Activated T-helper 1 cell treated with anti-CD3 and anti-CD28 coated beads, Interleukin-12 subunit alpha, Interleukin-12 subunit beta, Interleukin-2, Interleukin-4 antibody, amounts not matched to agents 30 ng/mL and 10 ng/mL and 1 ng/mL, durations not matched to agents 14 hours and 24 hours and 36 hours (primary cell): ENCODE measurements at regions of chr12 and their contacts with region 1.

Region 1: GRCh38 chr12:101186291-101186690 is 23.7 kb downstream of the SLC5A8 start:
- DNase-seq: no peak
- H3K4me3 Mint-ChIP-seq: no peak overlapping the region
- H3K27ac Mint-ChIP-seq: no peak overlapping the region
- H3K4me1 Mint-ChIP-seq: no peaks in the 10 kb centered on the region
- H3K27me3 Mint-ChIP-seq: peaks cover 5% of the 10 kb centered on the region

Region 2: GRCh38 chr12:101165319-101165718 is 21.0 kb before region 1 on chr12:
- intact Hi-C with region 1: loop called (anchors 1 kb)
- DNase-seq: no peak
- H3K4me3 Mint-ChIP-seq: no peak overlapping the region
- H3K27ac Mint-ChIP-seq: no peak overlapping the region
- H3K4me1 Mint-ChIP-seq: no peaks in the 10 kb centered on the region
- H3K27me3 Mint-ChIP-seq: no peaks in the 10 kb centered on the region

Region 3: DNA sequence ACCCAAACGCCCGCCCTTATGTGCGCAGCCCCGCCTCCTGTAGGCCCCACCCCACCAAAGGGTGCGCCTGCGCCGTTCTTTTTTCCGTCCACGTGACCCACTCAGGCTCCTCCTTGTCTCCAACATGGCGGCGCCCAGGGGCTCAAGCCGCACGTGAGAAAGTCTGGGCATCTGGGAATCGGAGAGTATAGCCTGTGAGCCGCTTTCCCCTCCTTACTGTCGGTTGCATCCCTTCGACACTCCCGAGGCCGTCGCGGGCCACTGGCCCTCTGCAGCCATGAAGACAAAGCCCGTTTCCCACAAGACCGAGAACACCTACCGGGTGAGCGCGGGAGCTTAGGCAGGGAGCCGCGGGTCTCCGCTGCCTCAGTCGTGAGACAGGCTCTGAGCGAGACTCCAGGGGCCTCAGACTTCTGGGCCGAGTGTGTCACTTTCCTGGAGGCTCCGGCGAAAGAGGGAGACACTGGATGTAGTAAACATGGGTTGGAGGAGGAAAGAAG is 93.8 kb after region 1 on chr12 and contains the start of gene UTP20:
- intact Hi-C with region 1: no loop called
- DNase-seq: peak; percentile 89
- H3K4me3 Mint-ChIP-seq: peak within 1 kb of the TSS; percentile 96
- H3K27ac Mint-ChIP-seq: peak within 1 kb of the TSS; percentile 75
- H3K4me1 Mint-ChIP-seq: peaks cover 22% of the 10 kb centered on the region
- H3K27me3 Mint-ChIP-seq: peaks cover 15% of the 10 kb centered on the region
- total RNA-seq, gene UTP20: 41.8 and 46.0 TPM in 2 replicates

Region 4: GRCh38 chr12:101430456-101430855 is 244.2 kb after region 1 on chr12:
- intact Hi-C with region 1: no loop called
- DNase-seq: no peak
- H3K4me3 Mint-ChIP-seq: no peak overlapping the region
- H3K27ac Mint-ChIP-seq: no peak overlapping the region
- H3K4me1 Mint-ChIP-seq: no peaks in the 10 kb centered on the region
- H3K27me3 Mint-ChIP-seq: peaks cover 8% of the 10 kb centered on the region

Region 5: GRCh38 chr12:102300824-102301461 is 1114.7 kb after region 1 on chr12:
- intact Hi-C with region 1: no loop called
- DNase-seq: peak; percentile 28
- H3K4me3 Mint-ChIP-seq: no peak overlapping the region
- H3K27ac Mint-ChIP-seq: no peak overlapping the region
- H3K4me1 Mint-ChIP-seq: peaks cover 21% of the 10 kb centered on the region
- H3K27me3 Mint-ChIP-seq: peaks cover 9% of the 10 kb centered on the region